HEK293 (cell line): ENCODE measurements at regions of chr6 and their contacts with region 1.

Region 1: DNA sequence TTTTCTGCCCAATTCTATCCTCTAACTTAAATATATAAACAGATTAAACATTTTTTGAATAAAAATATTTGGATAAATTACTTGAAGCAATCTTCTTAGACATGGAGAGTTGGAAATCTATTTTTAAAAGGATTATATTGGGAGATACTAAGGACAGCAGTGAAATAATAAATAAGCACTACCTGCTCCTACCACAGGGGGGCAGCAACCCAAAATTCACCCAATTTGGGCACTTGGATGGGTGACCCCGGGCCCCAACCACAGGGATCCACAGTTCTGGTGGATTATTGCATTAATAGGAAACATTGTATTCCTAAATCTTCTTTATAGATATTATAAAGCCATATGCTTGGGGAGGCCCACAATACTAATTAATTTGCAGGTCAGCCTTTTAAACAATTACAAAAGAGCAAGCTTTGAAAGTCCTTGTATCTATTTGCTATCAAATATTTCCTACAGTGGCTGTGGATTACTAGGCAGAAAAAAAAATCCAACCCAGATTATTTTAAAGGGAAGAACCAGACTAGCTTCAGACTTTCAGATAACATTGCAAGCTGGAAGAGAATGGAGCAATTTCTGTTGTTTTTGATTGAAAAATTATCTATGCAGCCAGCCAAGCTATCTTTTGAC is 66.4 kb upstream of the PDE10A start:
- H3K4me3 ChIP-seq: no peak overlapping the region
- H3K27ac ChIP-seq: no peak overlapping the region
- H3K4me1 ChIP-seq: no peaks in the 10 kb centered on the region
- CTCF ChIP-seq: 0 out of 2 replicates have a peak, but pooled peaks have one; percentile 26

Region 2: GRCh38 chr6:165707067-165707853 is 22.2 kb before region 1 on chr6:
- CTCF ChIA-PET with region 1: interaction called, 13 read pairs
- POLR2A ChIA-PET with region 1: no interaction called
- H3K4me3 ChIP-seq: no peak overlapping the region
- H3K27ac ChIP-seq: no peak overlapping the region
- H3K4me1 ChIP-seq: no peaks in the 10 kb centered on the region
- CTCF ChIP-seq: no peak

Region 3: DNA sequence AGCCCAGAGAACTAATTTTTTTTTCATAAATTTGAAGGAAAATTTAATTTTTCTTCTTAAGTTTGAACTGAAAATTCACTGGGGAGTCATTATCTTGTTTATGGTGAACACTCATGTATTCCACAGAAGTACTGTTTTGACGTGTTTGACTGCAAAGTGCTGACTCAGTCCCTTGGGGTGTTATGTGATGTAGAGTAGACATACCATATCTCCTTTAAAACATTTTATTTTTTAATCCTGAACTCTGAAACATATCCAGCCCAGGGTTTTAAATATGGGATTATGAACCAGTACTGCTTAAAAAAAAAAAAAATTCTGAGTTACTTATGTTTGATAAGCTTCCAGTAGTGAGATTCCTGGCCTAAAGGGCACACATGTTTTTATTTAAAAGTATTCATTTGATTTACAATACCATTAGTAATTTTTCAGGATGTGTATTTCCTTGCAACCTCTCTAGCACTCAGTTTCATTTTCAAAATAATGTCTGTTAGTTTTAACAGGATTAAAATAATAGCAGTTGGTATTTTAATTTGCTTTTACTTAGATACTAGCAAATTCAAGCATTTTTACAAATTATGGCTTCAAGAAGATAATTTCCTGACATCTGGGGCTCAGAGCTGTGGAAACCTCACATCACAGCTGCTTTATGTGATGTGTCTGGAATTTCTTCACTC is 15.3 kb after region 1 on chr6:
- CTCF ChIA-PET with region 1: interaction called, 20 read pairs
- POLR2A ChIA-PET with region 1: no interaction called
- H3K4me3 ChIP-seq: no peak overlapping the region
- H3K27ac ChIP-seq: no peak overlapping the region
- H3K4me1 ChIP-seq: no peaks in the 10 kb centered on the region
- CTCF ChIP-seq: no peak

Region 4: DNA sequence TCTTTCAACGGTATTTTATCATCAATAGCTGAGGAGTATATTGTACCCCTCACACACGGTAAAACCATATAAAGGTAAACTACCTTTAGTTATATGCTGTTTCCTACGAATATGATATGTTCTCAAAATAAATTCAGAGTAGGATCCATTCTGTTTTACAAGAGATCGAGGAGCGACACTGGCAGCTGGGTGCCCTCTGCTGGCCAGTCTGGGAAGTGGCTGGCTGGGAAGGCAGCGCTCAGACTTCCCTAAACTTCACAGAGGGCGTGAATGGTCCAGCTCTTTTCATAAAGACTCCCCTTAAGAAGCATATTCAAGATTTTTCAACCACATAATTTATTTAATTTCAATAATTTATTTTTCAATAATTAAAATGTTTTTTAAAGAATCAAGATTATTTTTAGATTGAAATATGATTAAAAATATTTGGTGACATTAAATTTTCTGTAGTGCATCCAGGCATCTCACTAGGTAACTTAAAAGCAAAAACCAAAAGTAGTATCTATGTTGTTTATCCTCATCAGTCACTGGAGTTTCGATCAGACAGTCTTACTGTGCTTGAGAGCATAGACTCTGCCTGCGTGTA is 121.1 kb after region 1 on chr6:
- CTCF ChIA-PET with region 1: interaction called, 21 read pairs
- POLR2A ChIA-PET with region 1: no interaction called
- H3K4me3 ChIP-seq: no peak overlapping the region
- H3K27ac ChIP-seq: no peak overlapping the region
- H3K4me1 ChIP-seq: peaks cover 19% of the 10 kb centered on the region
- CTCF ChIP-seq: peak; percentile 66

Region 5: GRCh38 chr6:167298153-167298552 is 1568.7 kb after region 1 on chr6:
- CTCF ChIA-PET with region 1: no interaction called
- POLR2A ChIA-PET with region 1: no interaction called
- H3K4me3 ChIP-seq: no peak overlapping the region
- H3K27ac ChIP-seq: no peak overlapping the region
- H3K4me1 ChIP-seq: no peaks in the 10 kb centered on the region
- CTCF ChIP-seq: no peak